ENCODE measurements at regions of chr6 and their contacts with region 1.

Region 1: DNA sequence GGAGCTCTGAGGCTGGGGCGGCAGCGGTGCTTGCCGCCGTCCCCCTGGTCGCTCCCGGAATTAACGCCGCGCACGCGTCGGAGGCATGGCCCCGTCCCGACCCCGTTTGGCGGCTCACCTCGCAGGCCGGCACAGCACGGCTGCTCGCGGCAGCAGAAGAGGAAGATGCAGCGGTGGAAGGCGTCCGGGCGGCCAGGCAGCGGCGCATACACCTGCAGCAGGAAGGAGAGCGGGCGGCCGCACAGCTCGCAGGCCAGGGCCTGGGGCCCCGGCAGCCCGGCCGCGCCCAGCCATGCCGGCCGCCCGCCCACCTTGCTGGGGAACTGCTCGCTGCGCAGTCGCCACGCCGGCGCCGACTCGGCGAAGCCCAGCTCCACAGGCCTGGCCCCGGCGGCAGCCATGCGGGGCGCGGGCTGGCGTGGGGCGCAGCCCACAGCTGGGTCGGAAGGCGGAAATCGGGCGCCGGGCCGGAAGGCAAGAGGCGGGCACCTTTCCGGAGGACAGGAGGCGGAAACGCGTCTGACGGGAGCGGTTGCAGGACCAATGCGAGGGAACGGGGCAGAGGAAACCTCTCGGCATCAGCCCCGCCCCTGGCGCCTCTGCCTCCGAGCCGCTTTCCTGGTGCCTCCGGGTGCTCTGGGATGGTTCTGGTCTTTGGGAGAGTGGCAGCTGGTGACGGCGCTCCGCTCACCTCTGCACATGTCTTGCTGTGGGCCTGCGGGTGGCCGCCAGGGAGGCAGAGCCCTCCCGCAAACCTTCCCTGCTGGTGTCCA is at the start of gene PDCD2:
- DNase-seq: peak; percentile 96
- ATAC-seq: peak; percentile 96
- H3K4me3 Mint-ChIP-seq: peak within 1 kb of the TSS; percentile 91
- H3K27ac Mint-ChIP-seq: peak within 1 kb of the TSS; percentile 95
- H3K4me1 Mint-ChIP-seq: peaks cover 30% of the 10 kb centered on the region
- H3K27me3 Mint-ChIP-seq: no peaks in the 10 kb centered on the region
- total RNA-seq, gene PDCD2: 133 to 152 TPM

Region 2: GRCh38 chr6:170554013-170554795 is 30.2 kb before region 1 on chr6 and contains the start of gene TBP:
- CTCF ChIA-PET with region 1: interaction called, 9 read pairs
- POLR2A ChIA-PET with region 1: interaction called, 5 read pairs
- intact Hi-C with region 1: loop called (anchors 1 kb)
- DNase-seq: peak; percentile 98
- ATAC-seq: peak; percentile 96
- H3K4me3 Mint-ChIP-seq: no peak within 1 kb of the TSS
- H3K27ac Mint-ChIP-seq: no peak within 1 kb of the TSS
- H3K4me1 Mint-ChIP-seq: peaks cover 36% of the 10 kb centered on the region
- H3K27me3 Mint-ChIP-seq: no peaks in the 10 kb centered on the region
- total RNA-seq, gene TBP: 23.9 to 27.4 TPM

Measured in activated CD4-positive, alpha-beta T cell treated with anti-CD3 and anti-CD28 coated beads for 36 hours (primary cell).